CD4-positive, alpha-beta T cell (primary cell): ENCODE measurements at regions of chr6 and their contacts with region 1.

Region 1: GRCh38 chr6:2876210-2877056 is 26.7 kb downstream of the SERPINB9 start:
- DNase-seq: peak in 4 of 14 experiments; percentile 23 to 68 (median 62)
- ATAC-seq: no peak
- H3K4me3 ChIP-seq: peak overlapping the region; percentile 44
- H3K4me3 Mint-ChIP-seq: peak overlapping the region; percentile 95
- H3K27ac ChIP-seq: peak overlapping the region; percentile 73 to 79
- H3K27ac Mint-ChIP-seq: peak overlapping the region; percentile 87
- H3K4me1 ChIP-seq: peaks cover 63% of the 10 kb centered on the region
- H3K4me1 Mint-ChIP-seq: peaks cover 80% of the 10 kb centered on the region
- H3K27me3 ChIP-seq: no peaks in the 10 kb centered on the region
- H3K27me3 Mint-ChIP-seq: no peaks in the 10 kb centered on the region
- CTCF ChIP-seq: no peak

Region 2: DNA sequence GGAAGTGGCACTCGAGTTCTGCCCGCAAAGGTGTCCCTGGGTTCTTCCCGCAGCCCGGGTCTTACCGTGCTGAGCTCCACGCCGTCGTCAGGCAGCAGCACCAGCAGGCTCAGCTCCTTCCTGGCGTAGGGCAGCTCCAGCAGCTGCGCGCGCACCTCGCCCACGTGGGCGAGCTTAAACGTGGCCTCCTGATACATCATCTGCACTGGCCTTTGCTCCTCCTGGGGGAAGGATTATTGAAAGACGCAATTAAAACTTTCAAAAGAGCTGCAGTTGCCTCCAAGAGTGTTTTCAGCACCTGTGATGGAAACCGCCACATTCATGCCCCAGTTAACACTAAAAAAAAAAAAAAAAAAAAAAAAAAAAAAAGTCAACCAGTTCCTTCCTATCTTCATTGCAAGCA is 15.3 kb after region 1 on chr6:
- CTCF ChIA-PET with region 1: interaction called, 13 read pairs
- POLR2A ChIA-PET with region 1: interaction called, 21 read pairs
- intact Hi-C with region 1: loop called (anchors 2 kb)
- DNase-seq: peak; percentile 44 to 94 (median 72)
- ATAC-seq: peak; percentile 97
- H3K4me3 ChIP-seq: peak overlapping the region; percentile 9
- H3K4me3 Mint-ChIP-seq: peak overlapping the region; percentile 81
- H3K27ac ChIP-seq: peak overlapping the region; percentile 29 to 51
- H3K27ac Mint-ChIP-seq: peak overlapping the region; percentile 96
- H3K4me1 ChIP-seq: peaks cover 21% of the 10 kb centered on the region
- H3K4me1 Mint-ChIP-seq: peaks cover 80% of the 10 kb centered on the region
- H3K27me3 ChIP-seq: no peaks in the 10 kb centered on the region
- H3K27me3 Mint-ChIP-seq: no peaks in the 10 kb centered on the region
- CTCF ChIP-seq: no peak

Region 3: DNA sequence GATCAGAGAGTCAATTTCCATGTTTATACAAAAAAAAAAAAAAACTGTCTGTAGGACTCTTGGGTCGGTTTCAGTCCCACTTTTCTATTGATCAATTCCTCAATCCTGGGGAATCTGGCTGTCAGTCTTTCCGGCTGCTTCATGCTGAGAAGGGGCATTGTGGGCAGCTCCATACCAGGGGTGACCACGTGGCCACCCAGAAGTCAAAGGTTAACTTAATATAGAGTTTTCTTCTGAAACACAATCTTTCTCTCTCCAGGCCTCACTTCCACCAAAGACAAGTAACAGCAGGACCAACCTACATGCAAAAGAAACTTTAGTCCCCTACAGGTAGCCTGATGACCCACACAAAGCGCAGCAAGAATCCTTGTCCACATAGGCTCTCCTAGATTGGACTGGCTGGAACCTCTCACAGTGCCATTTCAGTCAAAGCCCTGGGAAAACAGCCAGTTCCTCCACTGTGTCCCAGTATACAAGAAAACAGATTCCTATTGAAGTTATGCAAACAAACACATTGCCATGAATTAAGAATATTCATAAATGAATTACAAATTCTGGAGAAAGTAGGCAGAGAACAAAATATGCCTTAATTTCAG is 45.2 kb after region 1 on chr6:
- CTCF ChIA-PET with region 1: no interaction called
- POLR2A ChIA-PET with region 1: no interaction called
- intact Hi-C with region 1: no loop called
- DNase-seq: no peak
- ATAC-seq: no peak
- H3K4me3 ChIP-seq: no peak overlapping the region
- H3K4me3 Mint-ChIP-seq: no peak overlapping the region
- H3K27ac ChIP-seq: no peak overlapping the region
- H3K27ac Mint-ChIP-seq: no peak overlapping the region
- H3K4me1 ChIP-seq: peaks cover 8% of the 10 kb centered on the region
- H3K4me1 Mint-ChIP-seq: peaks cover 12% of the 10 kb centered on the region
- H3K27me3 ChIP-seq: no peaks in the 10 kb centered on the region
- H3K27me3 Mint-ChIP-seq: no peaks in the 10 kb centered on the region
- CTCF ChIP-seq: no peak

Region 4: DNA sequence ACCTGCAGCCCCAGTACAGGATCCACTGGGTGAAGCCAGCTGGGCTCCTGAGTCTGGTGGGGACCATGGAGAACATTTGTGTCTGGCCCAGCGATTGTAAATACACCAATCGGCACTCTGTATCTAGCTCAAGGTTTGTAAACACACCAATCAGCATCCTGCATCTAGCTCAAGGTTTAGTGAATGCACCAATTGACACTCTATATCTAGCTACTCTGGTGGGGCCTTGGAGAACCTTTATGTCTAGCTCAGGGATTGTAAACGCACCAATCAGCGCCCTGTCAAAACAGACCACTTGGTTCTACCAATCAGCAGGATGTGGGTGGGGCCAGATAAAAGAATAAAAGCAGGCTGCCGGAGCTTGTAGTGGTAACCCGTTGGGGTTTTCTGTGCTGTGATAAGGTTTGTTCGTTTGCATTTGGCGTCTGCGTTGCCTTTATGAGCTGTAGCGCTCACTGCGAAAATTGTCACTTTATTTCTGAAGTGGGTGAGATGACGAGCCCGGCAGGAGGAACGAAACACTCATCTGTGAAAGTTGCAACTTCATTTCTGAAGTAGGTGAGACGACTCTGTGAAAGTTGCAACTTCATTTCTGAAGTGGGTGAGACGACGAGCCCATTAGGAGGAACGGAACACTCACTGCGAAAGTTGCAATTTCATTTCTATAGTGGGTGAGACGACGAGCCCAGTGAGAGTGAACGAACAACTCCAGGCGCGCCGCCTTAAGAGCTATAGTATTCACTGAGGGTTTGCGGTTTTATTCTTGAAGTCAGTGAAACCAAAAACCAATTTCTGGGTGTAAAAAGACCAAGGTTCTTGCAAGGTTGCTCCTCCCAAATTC is 63.8 kb after region 1 on chr6:
- CTCF ChIA-PET with region 1: no interaction called
- POLR2A ChIA-PET with region 1: interaction called, 14 read pairs
- intact Hi-C with region 1: no loop called
- DNase-seq: peak; percentile 56 to 92 (median 66)
- ATAC-seq: peak; percentile 73
- H3K4me3 ChIP-seq: peak overlapping the region; percentile 66
- H3K4me3 Mint-ChIP-seq: peak overlapping the region; percentile 85
- H3K27ac ChIP-seq: peak overlapping the region; percentile 55 to 86
- H3K27ac Mint-ChIP-seq: peak overlapping the region; percentile 90
- H3K4me1 ChIP-seq: peaks cover 69% of the 10 kb centered on the region
- H3K4me1 Mint-ChIP-seq: peaks cover 66% of the 10 kb centered on the region
- H3K27me3 ChIP-seq: no peaks in the 10 kb centered on the region
- H3K27me3 Mint-ChIP-seq: no peaks in the 10 kb centered on the region
- CTCF ChIP-seq: no peak